Activated T-helper 2 cell treated with anti-CD3 and anti-CD28 coated beads, Interferon-gamma antibody, Interleukin-2, Interleukin-4, amounts not matched to agents 10 μg/mL and 5 μg/mL and 100 μg/mL, durations not matched to agents 14 hours and 24 hours and 36 hours (primary cell): ENCODE measurements at regions of chr15 and their contacts with region 1.

Region 1: GRCh38 chr15:94306700-94307650 is 75.6 kb downstream of the MCTP2 start:
- DNase-seq: peak; percentile 18
- H3K4me3 Mint-ChIP-seq: peak overlapping the region; percentile 30
- H3K27ac Mint-ChIP-seq: peak overlapping the region; percentile 96
- H3K4me1 Mint-ChIP-seq: peaks cover 76% of the 10 kb centered on the region
- H3K27me3 Mint-ChIP-seq: no peaks in the 10 kb centered on the region

Region 2: GRCh38 chr15:94174399-94174802 is 132.6 kb before region 1 on chr15:
- intact Hi-C with region 1: loop called (anchors 1 kb)
- DNase-seq: no peak
- H3K4me3 Mint-ChIP-seq: peak overlapping the region; percentile 0
- H3K27ac Mint-ChIP-seq: peak overlapping the region; percentile 28
- H3K4me1 Mint-ChIP-seq: peaks cover 54% of the 10 kb centered on the region
- H3K27me3 Mint-ChIP-seq: peaks cover 1% of the 10 kb centered on the region

Region 3: DNA sequence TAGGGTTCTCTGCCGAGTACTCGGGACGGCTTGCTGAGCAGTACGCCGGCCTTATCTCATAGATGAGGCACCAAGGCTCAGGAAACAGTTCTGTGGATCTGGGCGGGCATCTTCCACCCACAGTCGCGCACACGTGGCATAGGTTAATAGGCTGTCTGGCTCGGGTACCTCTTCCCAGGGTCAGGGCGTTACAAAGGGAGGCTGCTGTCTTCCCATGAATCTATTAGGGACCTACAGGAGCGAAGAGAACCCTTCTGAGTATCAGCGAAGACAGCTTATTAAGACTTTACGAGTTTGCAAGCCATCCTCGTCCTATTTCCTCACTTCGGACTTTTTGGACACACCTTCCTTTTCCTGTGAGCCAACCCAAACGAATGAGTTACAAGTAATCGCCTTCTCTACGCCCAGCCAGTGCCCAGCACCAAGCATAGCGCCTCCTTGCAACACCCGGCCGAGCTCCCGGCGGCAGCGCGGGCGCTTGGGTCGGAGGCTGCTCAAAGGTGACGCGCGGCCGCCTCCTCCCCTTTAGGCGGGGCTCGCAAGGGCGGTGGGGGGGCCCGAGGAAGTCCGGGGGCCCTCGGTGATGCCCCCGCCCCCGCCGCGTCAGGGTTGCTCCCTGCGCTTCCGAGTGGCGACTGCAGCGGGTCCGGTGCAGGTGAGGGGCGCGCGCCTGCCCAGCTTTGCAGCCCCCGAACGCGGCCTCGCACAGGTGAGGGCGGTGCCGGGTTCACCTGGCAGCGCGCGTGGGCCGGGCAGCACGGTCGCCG is 75.8 kb before region 1 on chr15 and contains the start of gene MCTP2:
- intact Hi-C with region 1: loop called (anchors 1 kb)
- DNase-seq: peak; percentile 86
- H3K4me3 Mint-ChIP-seq: peak within 1 kb of the TSS; percentile 91
- H3K27ac Mint-ChIP-seq: peak within 1 kb of the TSS; percentile 95
- H3K4me1 Mint-ChIP-seq: peaks cover 79% of the 10 kb centered on the region
- H3K27me3 Mint-ChIP-seq: no peaks in the 10 kb centered on the region
- total RNA-seq, gene MCTP2: 91.5 and 93.2 TPM in 2 replicates

Region 4: DNA sequence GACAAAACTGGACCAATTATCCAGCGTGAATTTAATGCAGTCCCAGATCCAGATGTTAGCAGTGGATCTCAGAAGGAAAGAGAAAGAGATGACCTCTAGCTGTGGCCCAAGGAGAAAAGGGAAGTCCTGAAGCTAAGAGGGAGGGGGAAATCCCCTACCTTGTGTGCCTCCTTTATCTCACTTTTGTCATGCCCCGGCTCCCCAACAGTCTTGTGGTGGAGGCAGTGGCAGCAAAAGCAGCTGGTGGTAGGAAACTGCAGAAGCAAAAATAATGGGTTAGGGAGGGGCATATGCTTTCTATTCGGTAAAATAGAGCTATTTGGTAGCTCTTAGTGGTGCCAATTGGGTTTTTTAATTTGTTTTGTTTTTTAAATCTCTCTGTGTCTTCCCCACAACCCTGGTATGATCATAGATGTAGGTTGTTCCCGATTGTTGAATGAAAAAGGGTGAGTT is 19.2 kb before region 1 on chr15:
- intact Hi-C with region 1: loop called (anchors 1 kb)
- DNase-seq: peak; percentile 60
- H3K4me3 Mint-ChIP-seq: peak overlapping the region; percentile 83
- H3K27ac Mint-ChIP-seq: peak overlapping the region; percentile 94
- H3K4me1 Mint-ChIP-seq: peaks cover 67% of the 10 kb centered on the region
- H3K27me3 Mint-ChIP-seq: no peaks in the 10 kb centered on the region

Region 5: DNA sequence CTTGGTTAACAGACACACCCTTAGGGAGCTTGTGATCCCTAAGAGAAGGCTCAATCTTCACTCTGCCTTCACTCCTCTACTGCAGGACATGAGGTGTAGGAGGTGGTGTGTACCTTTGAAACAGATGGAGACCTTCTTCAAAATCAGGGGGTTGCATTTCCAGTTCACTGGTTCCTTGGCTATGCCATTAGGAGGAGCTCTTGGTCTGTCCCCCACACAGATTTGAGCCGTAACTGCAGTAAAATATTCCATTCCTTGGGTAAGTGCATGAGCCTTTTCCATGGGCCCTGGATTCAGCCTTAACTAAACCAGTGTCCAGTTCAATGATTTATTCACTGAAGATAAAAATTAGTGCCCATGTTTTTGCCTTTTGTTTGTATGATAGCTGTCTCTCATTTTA is 69.0 kb after region 1 on chr15:
- intact Hi-C with region 1: no loop called
- DNase-seq: no peak
- H3K4me3 Mint-ChIP-seq: no peak overlapping the region
- H3K27ac Mint-ChIP-seq: no peak overlapping the region
- H3K4me1 Mint-ChIP-seq: no peaks in the 10 kb centered on the region
- H3K27me3 Mint-ChIP-seq: no peaks in the 10 kb centered on the region

Region 6: GRCh38 chr15:94582369-94582768 is 275.4 kb after region 1 on chr15:
- intact Hi-C with region 1: loop called (anchors 10 kb)
- DNase-seq: no peak
- H3K4me3 Mint-ChIP-seq: no peak overlapping the region
- H3K27ac Mint-ChIP-seq: no peak overlapping the region
- H3K4me1 Mint-ChIP-seq: peaks cover 31% of the 10 kb centered on the region
- H3K27me3 Mint-ChIP-seq: peaks cover 73% of the 10 kb centered on the region